CD4-positive, alpha-beta T cell (primary cell): ENCODE measurements at regions of chr9 and their contacts with region 1.

Region 1: GRCh38 chr9:127734747-127735529 is at the start of gene TOR2A:
- DNase-seq: peak; percentile 97 to 100 (median 98)
- ATAC-seq: peak; percentile 93
- H3K4me3 ChIP-seq: peak within 1 kb of the TSS; percentile 61
- H3K4me3 Mint-ChIP-seq: peak within 1 kb of the TSS; percentile 99
- H3K27ac ChIP-seq: peak within 1 kb of the TSS; percentile 73 to 75
- H3K27ac Mint-ChIP-seq: peak within 1 kb of the TSS; percentile 83
- H3K4me1 ChIP-seq: peaks cover 22% of the 10 kb centered on the region
- H3K4me1 Mint-ChIP-seq: peaks cover 16% of the 10 kb centered on the region
- H3K27me3 ChIP-seq: no peaks in the 10 kb centered on the region
- H3K27me3 Mint-ChIP-seq: no peaks in the 10 kb centered on the region
- CTCF ChIP-seq: peak; percentile 81
- total RNA-seq, gene TOR2A: 7.6 to 8.2 TPM

Region 2: GRCh38 chr9:127214421-127215267 is 520.3 kb before region 1 on chr9:
- CTCF ChIA-PET with region 1: no interaction called
- POLR2A ChIA-PET with region 1: no interaction called
- intact Hi-C with region 1: loop called (anchors 5 to 10 kb)
- DNase-seq: peak; percentile 40 to 78 (median 54)
- ATAC-seq: peak; percentile 92
- H3K4me3 ChIP-seq: no peak overlapping the region
- H3K4me3 Mint-ChIP-seq: no peak overlapping the region
- H3K27ac ChIP-seq: no peak overlapping the region
- H3K27ac Mint-ChIP-seq: no peak overlapping the region
- H3K4me1 ChIP-seq: no peaks in the 10 kb centered on the region
- H3K4me1 Mint-ChIP-seq: peaks cover 5% of the 10 kb centered on the region
- H3K27me3 ChIP-seq: no peaks in the 10 kb centered on the region
- H3K27me3 Mint-ChIP-seq: peaks cover 16% of the 10 kb centered on the region
- CTCF ChIP-seq: peak; percentile 83

Region 3: DNA sequence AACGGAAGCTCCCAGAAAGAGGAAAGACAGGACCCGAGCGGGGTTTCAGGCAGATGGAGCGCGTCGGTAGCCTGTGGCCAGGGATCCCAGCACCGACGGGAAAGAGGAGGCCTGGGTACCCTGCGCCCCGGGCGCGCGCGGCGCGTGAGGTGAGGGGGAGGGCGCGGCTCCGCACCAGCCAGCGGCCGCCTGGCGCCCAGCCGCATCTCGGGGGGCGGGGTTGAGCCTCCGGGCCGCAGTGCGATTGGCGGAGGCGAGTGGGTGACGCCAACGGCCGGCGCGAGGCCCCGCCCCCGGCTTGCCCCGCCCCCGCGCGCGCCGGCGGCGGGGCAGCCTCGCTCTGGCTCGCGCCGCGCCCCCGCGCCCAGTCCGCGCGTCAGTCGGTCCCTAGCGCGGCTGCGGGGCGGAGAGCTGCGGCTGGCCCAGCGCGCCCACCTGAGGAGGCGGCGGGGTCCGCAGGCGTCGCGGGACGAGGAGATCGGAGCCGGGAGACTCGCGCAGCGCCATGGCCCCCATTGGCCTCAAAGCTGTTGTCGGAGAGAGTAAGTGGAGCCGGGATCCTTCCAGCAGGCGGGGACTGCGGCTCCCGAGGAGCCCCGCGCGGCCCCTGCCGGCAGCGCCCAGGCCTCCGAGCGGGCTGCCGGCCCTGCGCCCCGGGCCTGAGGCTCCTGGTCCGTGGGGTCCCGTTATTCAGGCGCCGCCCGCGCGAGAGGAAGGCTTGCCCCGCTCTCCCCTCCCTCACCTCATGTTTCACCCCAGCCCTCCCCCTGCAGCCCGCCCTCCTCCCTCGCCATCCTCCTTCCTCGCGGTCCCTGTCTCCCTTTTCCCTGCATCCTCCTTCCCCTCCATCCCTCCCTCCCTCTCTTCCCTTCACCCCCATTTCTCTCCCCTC is 122.8 kb before region 1 on chr9 and contains the start of gene STXBP1:
- CTCF ChIA-PET with region 1: interaction called, 7 read pairs
- POLR2A ChIA-PET with region 1: interaction called, 3 read pairs
- intact Hi-C with region 1: loop called in 1 of 2 experiments (anchors 5 kb)
- DNase-seq: peak; percentile 66 to 93 (median 84)
- ATAC-seq: peak; percentile 76
- H3K4me3 ChIP-seq: peak within 1 kb of the TSS; percentile 57
- H3K4me3 Mint-ChIP-seq: peak within 1 kb of the TSS; percentile 99
- H3K27ac ChIP-seq: no peak within 1 kb of the TSS
- H3K27ac Mint-ChIP-seq: peak within 1 kb of the TSS; percentile 45
- H3K4me1 ChIP-seq: peaks cover 35% of the 10 kb centered on the region
- H3K4me1 Mint-ChIP-seq: peaks cover 32% of the 10 kb centered on the region
- H3K27me3 ChIP-seq: peaks cover 0 to 8% of the 10 kb centered on the region in 2 experiments
- H3K27me3 Mint-ChIP-seq: peaks cover 47% of the 10 kb centered on the region
- CTCF ChIP-seq: no peak
- total RNA-seq, gene STXBP1: 1.9 to 3.4 TPM

Region 4: DNA sequence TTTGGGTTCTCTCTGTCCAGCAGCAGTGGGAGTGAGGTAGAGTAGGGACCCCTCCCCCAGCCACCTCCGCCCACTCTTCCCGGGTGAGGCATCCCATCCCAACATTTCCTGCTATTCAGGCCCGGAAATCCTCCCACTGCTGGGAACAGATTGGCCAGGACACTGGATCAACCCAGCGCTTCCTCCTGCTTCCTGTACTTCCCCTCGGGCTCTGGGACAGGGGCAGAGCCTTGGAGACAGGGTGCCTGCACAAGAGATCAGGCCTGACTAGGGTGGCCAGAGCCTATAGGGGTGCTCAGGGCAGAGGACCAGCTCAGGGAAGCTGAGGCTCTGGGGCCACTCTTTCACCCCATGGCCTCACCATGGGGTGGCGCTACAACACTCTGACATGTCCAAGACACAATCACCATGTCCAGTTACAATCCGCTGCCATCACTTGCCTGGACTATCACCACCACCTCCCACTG is 29.0 kb after region 1 on chr9:
- CTCF ChIA-PET with region 1: interaction called, 13 read pairs
- POLR2A ChIA-PET with region 1: no interaction called
- intact Hi-C with region 1: no loop called
- DNase-seq: peak in 3 of 14 experiments; percentile 55 to 64 (median 62)
- ATAC-seq: no peak
- H3K4me3 ChIP-seq: no peak overlapping the region
- H3K4me3 Mint-ChIP-seq: no peak overlapping the region
- H3K27ac ChIP-seq: no peak overlapping the region
- H3K27ac Mint-ChIP-seq: peak overlapping the region; percentile 22
- H3K4me1 ChIP-seq: peaks cover 66% of the 10 kb centered on the region
- H3K4me1 Mint-ChIP-seq: peaks cover 63% of the 10 kb centered on the region
- H3K27me3 ChIP-seq: no peaks in the 10 kb centered on the region
- H3K27me3 Mint-ChIP-seq: no peaks in the 10 kb centered on the region
- CTCF ChIP-seq: no peak

Region 5: GRCh38 chr9:127785023-127785932 is 50.3 kb after region 1 on chr9:
- CTCF ChIA-PET with region 1: interaction called, 43 read pairs
- POLR2A ChIA-PET with region 1: interaction called, 40 read pairs
- intact Hi-C with region 1: loop called (anchors 1 kb)
- DNase-seq: peak; percentile 80 to 95 (median 89)
- ATAC-seq: peak; percentile 51
- H3K4me3 ChIP-seq: peak overlapping the region; percentile 50
- H3K4me3 Mint-ChIP-seq: peak overlapping the region; percentile 81
- H3K27ac ChIP-seq: peak overlapping the region; percentile 85 to 89
- H3K27ac Mint-ChIP-seq: peak overlapping the region; percentile 97
- H3K4me1 ChIP-seq: peaks cover 84% of the 10 kb centered on the region
- H3K4me1 Mint-ChIP-seq: peaks cover 72% of the 10 kb centered on the region
- H3K27me3 ChIP-seq: no peaks in the 10 kb centered on the region
- H3K27me3 Mint-ChIP-seq: no peaks in the 10 kb centered on the region
- CTCF ChIP-seq: peak; percentile 76

Region 6: DNA sequence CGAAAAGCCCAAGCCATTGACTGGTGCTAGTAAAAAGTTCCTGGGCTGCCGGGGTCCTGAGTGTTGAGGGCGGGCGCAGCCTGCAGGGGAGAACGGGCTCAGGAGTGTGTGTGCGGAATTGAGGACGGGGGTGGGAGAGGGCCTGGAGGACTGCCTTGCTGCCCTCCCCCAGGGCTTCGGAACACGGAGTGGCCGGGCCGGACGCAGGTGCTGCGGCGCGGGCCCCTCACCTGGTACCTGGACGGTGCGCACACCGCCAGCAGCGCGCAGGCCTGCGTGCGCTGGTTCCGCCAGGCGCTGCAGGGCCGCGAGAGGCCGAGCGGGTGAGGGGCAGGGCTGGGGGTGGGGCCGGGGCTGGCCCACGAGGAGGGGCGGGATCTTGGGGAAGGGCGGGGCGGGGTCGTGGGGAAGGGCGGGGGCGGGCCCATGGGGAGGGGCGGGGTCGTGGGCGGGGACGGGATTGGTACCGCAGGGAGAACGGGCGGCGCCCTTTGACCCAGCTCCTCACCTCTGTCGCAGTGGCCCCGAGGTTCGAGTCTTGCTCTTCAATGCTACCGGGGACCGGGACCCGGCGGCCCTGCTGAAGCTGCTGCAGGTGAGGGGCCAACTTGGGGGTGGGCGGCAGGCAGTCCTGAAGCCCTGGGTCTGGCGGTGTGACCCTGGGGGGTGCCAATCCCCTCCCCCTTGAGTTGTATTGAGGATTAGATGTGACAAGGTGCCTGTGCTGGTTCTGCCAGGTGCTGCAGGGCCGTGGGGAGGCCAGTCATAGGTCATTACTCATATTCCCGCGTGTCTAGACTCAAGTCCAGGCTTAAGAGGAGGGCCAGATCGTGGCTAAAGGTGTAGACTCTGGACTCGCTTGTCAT is 74.8 kb after region 1 on chr9:
- CTCF ChIA-PET with region 1: no interaction called
- POLR2A ChIA-PET with region 1: no interaction called
- intact Hi-C with region 1: no loop called
- DNase-seq: peak in 1 of 14 experiments; percentile 27
- ATAC-seq: no peak
- H3K4me3 ChIP-seq: no peak overlapping the region
- H3K4me3 Mint-ChIP-seq: no peak overlapping the region
- H3K27ac ChIP-seq: no peak overlapping the region
- H3K27ac Mint-ChIP-seq: no peak overlapping the region
- H3K4me1 ChIP-seq: peaks cover 2% of the 10 kb centered on the region
- H3K4me1 Mint-ChIP-seq: no peaks in the 10 kb centered on the region
- H3K27me3 ChIP-seq: no peaks in the 10 kb centered on the region
- H3K27me3 Mint-ChIP-seq: no peaks in the 10 kb centered on the region
- CTCF ChIP-seq: no peak

Region 7: GRCh38 chr9:127916665-127917613 is 182.0 kb after region 1 on chr9 and contains the start of gene ST6GALNAC4:
- CTCF ChIA-PET with region 1: interaction called, 10 read pairs
- POLR2A ChIA-PET with region 1: interaction called, 11 read pairs
- intact Hi-C with region 1: loop called (anchors 1 to 2 kb)
- DNase-seq: peak; percentile 89 to 99 (median 96)
- ATAC-seq: peak; percentile 94
- H3K4me3 ChIP-seq: peak within 1 kb of the TSS; percentile 91
- H3K4me3 Mint-ChIP-seq: peak within 1 kb of the TSS; percentile 88
- H3K27ac ChIP-seq: peak within 1 kb of the TSS in 1 of 2 donors; percentile 56
- H3K27ac Mint-ChIP-seq: peak within 1 kb of the TSS; percentile 89
- H3K4me1 ChIP-seq: peaks cover 65% of the 10 kb centered on the region
- H3K4me1 Mint-ChIP-seq: peaks cover 51% of the 10 kb centered on the region
- H3K27me3 ChIP-seq: no peaks in the 10 kb centered on the region
- H3K27me3 Mint-ChIP-seq: no peaks in the 10 kb centered on the region
- CTCF ChIP-seq: no peak
- total RNA-seq, gene ST6GALNAC4: 28.7 to 30.2 TPM